Colonic mucosa (tissue), 4 donors: ENCODE measurements at regions of chr7 and their contacts with region 1.

Region 1: GRCh38 chr7:105013221-105013815 is 687 bp upstream of the KMT2E start:
- DNase-seq: peak; percentile 94
- H3K4me3 ChIP-seq: peak overlapping the region; percentile 62
- H3K27ac ChIP-seq: peak overlapping the region; percentile 99
- H3K4me1 ChIP-seq: peaks cover 8% of the 10 kb centered on the region
- H3K27me3 ChIP-seq: no peaks in the 10 kb centered on the region
- CTCF ChIP-seq: peak; percentile 27

Region 2: GRCh38 chr7:104723001-104723400 is 290.3 kb before region 1 on chr7:
- intact Hi-C with region 1: no loop called
- DNase-seq: no peak
- H3K4me3 ChIP-seq: no peak overlapping the region
- H3K27ac ChIP-seq: no peak overlapping the region
- H3K4me1 ChIP-seq: no peaks in the 10 kb centered on the region
- H3K27me3 ChIP-seq: no peaks in the 10 kb centered on the region
- CTCF ChIP-seq: no peak

Region 3: GRCh38 chr7:104943502-104944343 is 69.6 kb before region 1 on chr7:
- intact Hi-C with region 1: loop called (anchors 10 kb)
- DNase-seq: peak; percentile 99
- H3K4me3 ChIP-seq: no peak overlapping the region
- H3K27ac ChIP-seq: peak overlapping the region; percentile 99
- H3K4me1 ChIP-seq: peaks cover 24% of the 10 kb centered on the region
- H3K27me3 ChIP-seq: no peaks in the 10 kb centered on the region
- CTCF ChIP-seq: no peak

Region 4: GRCh38 chr7:104983578-104984539 is 29.5 kb before region 1 on chr7:
- intact Hi-C with region 1: loop called (anchors 2 kb)
- DNase-seq: peak; percentile 91
- H3K4me3 ChIP-seq: peak overlapping the region; percentile 26
- H3K27ac ChIP-seq: peak overlapping the region; percentile 97
- H3K4me1 ChIP-seq: peaks cover 11% of the 10 kb centered on the region
- H3K27me3 ChIP-seq: no peaks in the 10 kb centered on the region
- CTCF ChIP-seq: peak; percentile 52